HEK293 (cell line): ENCODE measurements at regions of chr4 and their contacts with region 1.

Region 1: DNA sequence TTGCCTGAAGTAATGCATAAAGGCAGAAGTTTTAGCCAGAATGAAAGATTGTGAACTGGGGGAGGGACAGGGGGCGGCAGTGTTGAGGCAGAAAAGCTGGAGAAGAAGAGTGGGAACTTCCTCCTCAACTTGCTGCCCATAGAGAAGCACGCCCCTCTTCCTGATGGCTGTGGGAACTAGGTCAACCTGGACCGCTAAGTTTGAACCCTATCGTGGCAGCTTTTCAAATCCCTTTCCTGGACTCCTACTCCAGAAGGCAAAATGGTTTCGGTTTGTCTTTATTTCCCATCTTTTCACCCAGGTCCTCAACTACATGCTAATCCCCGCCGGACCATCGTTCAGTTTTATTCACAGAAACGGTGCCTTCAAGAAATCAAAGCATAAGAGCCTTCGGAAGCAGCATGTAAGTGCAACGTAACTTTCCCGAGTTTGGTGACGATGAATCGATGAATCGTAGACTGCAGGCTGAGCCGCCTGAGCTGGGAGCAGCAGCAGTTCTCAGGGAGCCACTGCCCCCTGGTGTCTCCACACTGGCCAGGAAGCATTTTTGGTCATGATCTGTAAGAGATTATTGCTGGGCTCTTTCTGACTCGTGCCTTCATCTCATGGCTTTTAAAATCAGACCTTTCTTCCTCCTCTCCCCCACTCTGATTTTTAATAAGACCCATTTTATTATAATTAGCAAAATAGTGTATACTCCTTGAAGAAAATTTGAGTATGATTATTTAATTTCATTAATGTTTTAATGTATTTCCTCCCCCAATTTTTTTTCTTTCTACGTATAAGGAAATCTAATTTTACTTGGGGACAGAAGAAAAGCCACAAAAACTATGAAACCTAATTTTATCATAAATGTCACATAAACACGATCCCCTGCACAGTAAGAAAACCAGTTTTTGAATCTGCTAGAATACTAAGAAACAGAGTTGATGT is 21.4 kb downstream of the SPINK2 start:
- H3K4me3 ChIP-seq: peak overlapping the region; percentile 46
- H3K27ac ChIP-seq: no peak overlapping the region
- H3K4me1 ChIP-seq: no peaks in the 10 kb centered on the region
- CTCF ChIP-seq: peak; percentile 22

Region 2: GRCh38 chr4:56575820-56576429 is 224.2 kb before region 1 on chr4:
- CTCF ChIA-PET with region 1: interaction called, 11 read pairs
- POLR2A ChIA-PET with region 1: no interaction called
- H3K4me3 ChIP-seq: no peak overlapping the region
- H3K27ac ChIP-seq: no peak overlapping the region
- H3K4me1 ChIP-seq: no peaks in the 10 kb centered on the region
- CTCF ChIP-seq: no peak; the same call in 1 of the 2 replicates

Region 3: GRCh38 chr4:56892691-56893090 is 92.6 kb after region 1 on chr4:
- CTCF ChIA-PET with region 1: no interaction called
- POLR2A ChIA-PET with region 1: no interaction called
- H3K4me3 ChIP-seq: no peak overlapping the region
- H3K27ac ChIP-seq: no peak overlapping the region
- H3K4me1 ChIP-seq: no peaks in the 10 kb centered on the region
- CTCF ChIP-seq: no peak

Region 4: DNA sequence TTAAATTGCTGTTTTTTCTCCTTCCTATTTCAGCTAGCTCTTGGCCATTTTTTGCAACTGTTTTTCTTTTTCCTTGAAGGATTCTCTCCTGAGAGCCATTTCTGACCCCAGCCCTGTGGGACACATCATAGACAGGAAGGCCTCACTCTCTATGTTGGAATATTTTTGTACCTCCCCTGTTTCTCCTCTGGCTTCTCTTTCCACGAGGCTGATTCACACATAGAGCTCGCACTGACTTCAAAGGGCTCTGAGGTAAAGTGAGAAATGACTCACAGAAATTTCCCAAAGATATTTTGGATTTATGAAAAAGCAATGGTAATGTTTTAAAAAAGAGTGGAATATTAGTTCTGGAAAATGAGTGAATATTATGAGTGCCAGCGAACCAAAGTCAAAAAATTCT is 491.8 kb after region 1 on chr4:
- CTCF ChIA-PET with region 1: no interaction called
- POLR2A ChIA-PET with region 1: no interaction called
- H3K4me3 ChIP-seq: no peak overlapping the region
- H3K27ac ChIP-seq: no peak overlapping the region
- H3K4me1 ChIP-seq: no peaks in the 10 kb centered on the region
- CTCF ChIP-seq: no peak